ENCODE measurements at regions of chr5 and their contacts with region 1.

Region 1: DNA sequence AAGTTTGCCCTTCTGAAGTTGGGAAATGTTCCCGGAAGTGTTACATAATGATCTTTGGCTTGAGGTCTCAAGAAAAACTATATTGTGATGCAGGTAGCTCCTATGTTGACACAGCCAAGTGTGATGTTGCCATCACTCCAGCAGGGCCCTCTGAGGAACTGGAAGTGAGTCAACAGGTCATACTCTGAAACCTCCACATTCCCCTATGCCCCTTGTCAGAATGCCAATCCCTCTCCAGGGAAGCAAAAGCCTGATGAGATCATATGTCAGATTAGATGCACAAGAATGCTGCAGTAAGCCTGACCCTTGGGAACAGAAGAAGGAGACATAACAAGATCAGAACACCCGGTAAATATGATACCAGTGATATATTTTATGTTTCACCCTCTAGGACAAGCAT is 66.8 kb upstream of the ITGA2 start:
- DNase-seq: no peak
- H3K4me3 ChIP-seq: no peak overlapping the region
- H3K27ac ChIP-seq: no peak overlapping the region
- H3K4me1 ChIP-seq: peaks cover 0 to 2% (median 0%) of the 10 kb centered on the region in 4 donors
- H3K27me3 ChIP-seq: no peaks in the 10 kb centered on the region
- CTCF ChIP-seq: no peak
- EP300 ChIP-seq: no peak
- POLR2A ChIP-seq: no peak

Region 2: GRCh38 chr5:52787600-52788504 is 134.5 kb before region 1 on chr5 and contains the starts of genes ITGA1 and PELO:
- in situ Hi-C with region 1: loop called (anchors 10 to 25 kb)
- intact Hi-C with region 1: loop called (anchors 5 kb)
- DNase-seq: peak; percentile 78
- H3K4me3 ChIP-seq: peak within 1 kb of the TSS; percentile 55 to 77 (median 70)
- H3K27ac ChIP-seq: peak within 1 kb of the TSS; percentile 91 to 98 (median 95)
- H3K4me1 ChIP-seq: peaks cover 0 to 34% (median 14%) of the 10 kb centered on the region in 4 donors
- H3K27me3 ChIP-seq: no peaks in the 10 kb centered on the region
- CTCF ChIP-seq: peak; percentile 19 to 35 (median 21)
- EP300 ChIP-seq: no peak
- POLR2A ChIP-seq: peak; percentile 72
- total RNA-seq, gene ITGA1: 42.6 to 83.2 (median 48.0) TPM
- total RNA-seq, gene PELO: 10.1 to 62.3 (median 16.8) TPM

Region 3: DNA sequence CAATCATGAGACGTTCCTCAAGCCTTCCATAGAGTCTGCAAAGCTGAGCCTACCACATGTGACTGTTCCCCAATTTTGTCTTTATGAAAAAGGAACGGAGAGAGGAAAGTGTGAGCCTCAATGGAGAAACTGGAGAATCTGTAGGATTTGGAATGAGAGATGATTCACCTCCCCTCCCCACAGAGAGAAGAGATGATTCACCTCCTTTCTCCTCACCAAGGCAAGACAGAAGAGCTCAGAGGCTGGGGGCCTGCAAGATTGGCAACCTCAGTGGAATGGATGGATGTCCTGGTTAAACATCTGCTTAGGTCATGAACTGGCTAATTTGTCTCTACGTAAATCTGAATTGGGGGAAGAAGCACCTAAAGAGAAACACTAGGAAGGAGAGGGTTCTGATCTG is 204.1 kb after region 1 on chr5:
- in situ Hi-C with region 1: no loop called
- intact Hi-C with region 1: no loop called
- DNase-seq: no peak
- H3K4me3 ChIP-seq: no peak overlapping the region
- H3K27ac ChIP-seq: no peak overlapping the region
- H3K4me1 ChIP-seq: no peaks in the 10 kb centered on the region
- H3K27me3 ChIP-seq: no peaks in the 10 kb centered on the region
- CTCF ChIP-seq: no peak
- EP300 ChIP-seq: no peak
- POLR2A ChIP-seq: no peak